Right ventricle myocardium inferior (tissue), 1 donor: ENCODE measurements at regions of chr12 and their contacts with region 1.

Region 1: DNA sequence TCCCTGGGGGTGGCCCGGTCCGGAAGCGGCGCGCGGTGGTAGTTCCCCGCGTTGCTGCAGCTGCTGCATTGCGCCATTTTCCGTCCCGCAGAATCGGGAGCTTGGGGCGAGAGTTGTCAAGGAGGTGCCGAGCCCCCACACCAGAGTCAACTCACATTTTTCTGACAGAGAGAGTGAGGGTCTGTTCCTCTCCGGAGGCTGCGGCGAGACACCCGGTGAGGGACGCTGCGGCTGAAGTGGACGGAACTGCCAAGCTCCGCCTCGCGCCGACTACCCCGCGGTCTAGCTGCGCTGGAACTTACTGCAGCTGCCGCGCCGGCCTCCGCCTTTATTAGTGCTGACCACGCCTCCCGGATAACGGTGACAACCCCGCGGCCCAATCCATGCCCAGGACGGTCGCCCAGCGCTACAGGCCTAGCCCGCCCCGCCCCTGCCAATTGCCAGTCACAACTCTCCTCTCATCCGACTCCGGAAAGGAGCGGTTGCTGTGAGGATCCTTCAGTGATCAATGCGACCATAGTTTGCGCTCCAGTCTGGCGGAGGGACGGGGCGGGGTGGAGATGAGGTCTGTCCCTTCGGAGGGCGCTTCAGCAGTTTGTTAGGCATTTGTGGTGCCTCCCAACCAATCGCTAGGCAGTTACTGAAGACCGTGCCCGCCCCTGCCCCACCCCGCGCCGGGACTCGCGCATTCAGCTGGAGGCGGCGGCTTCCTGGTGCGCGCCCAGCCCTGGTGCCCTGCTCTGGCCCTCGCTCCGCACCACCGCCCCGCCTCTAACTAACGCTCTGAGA is at the start of gene VAMP1:
- DNase-seq: peak; percentile 99
- ATAC-seq: peak; percentile 97
- total RNA-seq, gene VAMP1: 4.2 TPM

Region 2: GRCh38 chr12:6323340-6323994 is 147.1 kb before region 1 on chr12:
- intact Hi-C with region 1: loop called (anchors 1 kb)
- DNase-seq: peak; percentile 70
- ATAC-seq: peak; percentile 51

Region 3: DNA sequence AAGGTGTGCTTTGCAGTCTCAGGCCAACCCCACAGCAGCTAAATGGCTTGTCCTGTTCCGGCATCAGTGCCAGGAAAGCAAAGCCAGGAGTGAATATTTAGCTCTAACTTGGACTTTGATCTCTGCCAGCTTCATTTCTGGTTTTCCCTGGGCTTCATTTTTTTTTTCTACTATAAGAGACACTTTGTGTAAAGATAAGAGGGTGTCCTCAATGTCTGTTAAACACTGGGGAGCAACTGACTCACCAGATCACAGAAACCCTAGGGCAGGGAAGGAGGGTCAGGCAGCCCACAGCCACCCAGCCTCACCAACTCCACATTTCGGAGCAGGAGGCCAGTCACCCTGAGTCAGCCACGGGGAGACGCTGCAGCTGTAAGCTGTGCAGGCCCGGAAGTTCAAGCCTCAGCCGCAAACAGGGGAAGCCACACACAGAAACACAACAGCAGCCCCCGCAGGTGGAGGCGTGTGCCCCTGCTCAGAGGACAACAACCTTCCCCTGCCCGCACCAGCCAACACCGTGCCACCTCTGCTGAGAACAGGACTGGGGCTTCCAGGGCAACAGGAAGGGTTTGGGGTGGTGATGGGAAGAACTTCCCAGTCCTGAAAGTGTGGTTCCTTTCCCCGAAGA is 135.0 kb before region 1 on chr12:
- intact Hi-C with region 1: loop called (anchors 5 kb)
- DNase-seq: peak; percentile 87
- ATAC-seq: peak; percentile 30

Region 4: GRCh38 chr12:6423267-6424007 is 47.1 kb before region 1 on chr12:
- intact Hi-C with region 1: loop called (anchors 1 kb)
- DNase-seq: peak; percentile 92
- ATAC-seq: peak; percentile 98

Region 5: GRCh38 chr12:6451348-6452244 is 19.0 kb before region 1 on chr12 and contains the start of gene TAPBPL:
- intact Hi-C with region 1: loop called (anchors 2 kb)
- DNase-seq: peak; percentile 91
- ATAC-seq: peak; percentile 95
- total RNA-seq, gene TAPBPL: 15.7 TPM

Region 6: DNA sequence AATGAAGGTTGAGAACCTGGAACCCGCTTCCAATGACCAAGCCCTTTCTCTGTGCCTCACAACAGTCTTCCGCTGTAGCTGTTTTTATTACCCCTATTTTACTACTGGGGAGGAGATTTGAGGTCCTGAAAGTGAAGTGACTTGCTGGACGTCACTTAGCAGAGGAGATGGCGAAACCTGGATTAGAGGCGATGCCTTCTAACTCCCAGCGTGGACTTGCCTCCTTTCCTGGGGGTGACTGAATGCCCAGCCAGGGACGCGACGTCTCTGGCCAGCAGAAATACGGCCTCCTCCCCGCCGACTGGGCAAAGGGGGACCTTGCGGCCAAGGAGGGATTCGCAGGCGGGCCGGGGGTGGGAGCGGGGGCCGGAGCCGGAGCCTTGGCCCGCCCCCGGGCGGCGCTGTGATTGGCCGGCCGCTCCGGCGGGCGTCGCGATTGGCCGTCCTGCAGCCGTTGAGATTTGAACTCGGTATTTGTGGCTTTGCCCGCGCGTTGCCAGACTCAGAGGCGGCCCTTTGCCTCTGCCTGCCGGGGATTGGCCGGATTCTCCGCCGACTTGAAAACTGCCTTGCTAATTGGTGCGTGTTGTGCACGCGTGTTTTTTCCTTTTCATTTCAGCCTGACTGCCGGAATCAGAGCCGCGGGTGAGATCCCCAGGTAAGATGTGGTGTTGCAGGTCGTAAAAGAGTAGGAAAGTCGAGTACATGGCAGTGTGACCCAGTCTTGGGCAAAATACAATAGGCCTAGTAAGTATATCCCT is 23.1 kb after region 1 on chr12 and contains the start of gene NCAPD2:
- intact Hi-C with region 1: loop called (anchors 1 kb)
- DNase-seq: peak; percentile 98
- ATAC-seq: peak; percentile 97
- total RNA-seq, gene NCAPD2: 11.6 TPM

Region 7: DNA sequence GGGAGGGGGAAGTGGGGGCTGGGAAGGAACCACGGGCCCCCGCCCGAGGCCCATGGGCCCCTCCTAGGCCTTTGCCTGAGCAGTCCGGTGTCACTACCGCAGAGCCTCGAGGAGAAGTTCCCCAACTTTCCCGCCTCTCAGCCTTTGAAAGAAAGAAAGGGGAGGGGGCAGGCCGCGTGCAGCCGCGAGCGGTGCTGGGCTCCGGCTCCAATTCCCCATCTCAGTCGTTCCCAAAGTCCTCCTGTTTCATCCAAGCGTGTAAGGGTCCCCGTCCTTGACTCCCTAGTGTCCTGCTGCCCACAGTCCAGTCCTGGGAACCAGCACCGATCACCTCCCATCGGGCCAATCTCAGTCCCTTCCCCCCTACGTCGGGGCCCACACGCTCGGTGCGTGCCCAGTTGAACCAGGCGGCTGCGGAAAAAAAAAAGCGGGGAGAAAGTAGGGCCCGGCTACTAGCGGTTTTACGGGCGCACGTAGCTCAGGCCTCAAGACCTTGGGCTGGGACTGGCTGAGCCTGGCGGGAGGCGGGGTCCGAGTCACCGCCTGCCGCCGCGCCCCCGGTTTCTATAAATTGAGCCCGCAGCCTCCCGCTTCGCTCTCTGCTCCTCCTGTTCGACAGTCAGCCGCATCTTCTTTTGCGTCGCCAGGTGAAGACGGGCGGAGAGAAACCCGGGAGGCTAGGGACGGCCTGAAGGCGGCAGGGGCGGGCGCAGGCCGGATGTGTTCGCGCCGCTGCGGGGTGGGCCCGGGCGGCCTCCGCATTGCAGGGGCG is 63.5 kb after region 1 on chr12 and contains the start of gene GAPDH:
- intact Hi-C with region 1: loop called (anchors 1 kb)
- DNase-seq: peak; percentile 95
- ATAC-seq: peak; percentile 86
- total RNA-seq, gene GAPDH: 4,337 TPM